Activated CD8-positive, alpha-beta T cell treated with anti-CD3 and anti-CD28 coated beads, Interleukin-2, amount 10 ng/mL, durations not matched to agents 7 days and 5 days (primary cell): ENCODE measurements at regions of chr1 and their contacts with region 1.

Region 1: DNA sequence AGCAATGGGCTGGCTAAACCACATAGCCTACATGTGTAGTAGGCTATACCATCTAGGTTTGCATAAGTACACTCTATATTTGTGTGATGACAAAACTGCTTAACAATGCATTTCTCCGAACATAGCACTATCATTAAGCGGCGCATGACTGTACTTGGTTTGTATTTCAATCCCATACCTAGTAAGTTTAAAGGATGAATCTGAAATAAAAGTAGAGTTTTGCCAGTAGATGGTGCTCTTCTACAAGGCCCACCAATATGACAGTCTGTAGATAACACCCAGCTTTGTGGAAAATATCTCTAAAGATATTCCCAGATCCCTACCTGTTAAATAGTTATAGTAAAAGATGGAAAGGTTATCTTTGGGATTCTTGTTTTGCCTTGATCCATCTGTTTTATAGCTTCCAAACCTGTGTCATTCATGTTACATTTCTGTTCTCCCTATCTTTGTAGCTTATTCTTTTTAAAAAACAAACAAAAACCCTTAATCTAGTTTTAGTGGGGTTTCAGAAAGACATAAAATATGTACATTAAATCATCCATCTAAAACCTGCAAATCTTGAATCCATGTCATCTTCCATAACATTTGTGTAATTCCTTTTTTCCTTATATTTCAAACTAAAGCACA is 33.9 kb upstream of the ASPM start:
- DNase-seq: no peak
- ATAC-seq: peak; percentile 70
- H3K4me3 Mint-ChIP-seq: no peak overlapping the region
- H3K27ac Mint-ChIP-seq: no peak overlapping the region
- H3K4me1 Mint-ChIP-seq: no peaks in the 10 kb centered on the region
- H3K27me3 Mint-ChIP-seq: no peaks in the 10 kb centered on the region

Region 2: GRCh38 chr1:197096137-197096536 is 84.2 kb before region 1 on chr1:
- CTCF ChIA-PET with region 1: no interaction called
- POLR2A ChIA-PET with region 1: no interaction called
- DNase-seq: no peak
- ATAC-seq: no peak
- H3K4me3 Mint-ChIP-seq: no peak overlapping the region
- H3K27ac Mint-ChIP-seq: no peak overlapping the region
- H3K4me1 Mint-ChIP-seq: no peaks in the 10 kb centered on the region
- H3K27me3 Mint-ChIP-seq: no peaks in the 10 kb centered on the region

Region 3: GRCh38 chr1:197195100-197195499 is 14.7 kb after region 1 on chr1:
- CTCF ChIA-PET with region 1: interaction called, 27 read pairs
- POLR2A ChIA-PET with region 1: no interaction called
- DNase-seq: no peak
- ATAC-seq: no peak
- H3K4me3 Mint-ChIP-seq: no peak overlapping the region
- H3K27ac Mint-ChIP-seq: no peak overlapping the region
- H3K4me1 Mint-ChIP-seq: peaks cover 38% of the 10 kb centered on the region
- H3K27me3 Mint-ChIP-seq: no peaks in the 10 kb centered on the region

Region 4: GRCh38 chr1:197234581-197234980 is 54.2 kb after region 1 on chr1:
- CTCF ChIA-PET with region 1: no interaction called
- POLR2A ChIA-PET with region 1: no interaction called
- DNase-seq: no peak
- ATAC-seq: no peak
- H3K4me3 Mint-ChIP-seq: no peak overlapping the region
- H3K27ac Mint-ChIP-seq: no peak overlapping the region
- H3K4me1 Mint-ChIP-seq: no peaks in the 10 kb centered on the region
- H3K27me3 Mint-ChIP-seq: no peaks in the 10 kb centered on the region

Region 5: DNA sequence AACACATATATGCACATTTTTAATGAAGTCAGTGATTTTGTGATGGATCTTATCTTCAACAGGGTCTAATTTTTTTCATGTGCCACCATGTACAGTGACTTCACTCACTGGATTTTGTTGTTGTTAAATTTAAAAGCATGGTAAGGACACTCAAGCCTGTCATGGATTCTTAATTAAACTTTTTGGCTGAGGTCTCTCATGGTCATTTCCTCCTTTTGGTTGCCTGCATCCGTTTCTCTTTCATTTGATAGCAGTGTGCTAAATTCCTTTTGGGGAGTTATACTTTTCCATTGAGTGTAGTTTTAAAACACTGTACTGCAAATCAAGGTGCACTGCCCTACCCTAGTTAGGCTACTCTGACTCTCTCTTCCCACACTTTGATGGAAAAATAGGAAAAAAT is 74.5 kb after region 1 on chr1:
- CTCF ChIA-PET with region 1: no interaction called
- POLR2A ChIA-PET with region 1: no interaction called
- DNase-seq: no peak
- ATAC-seq: no peak
- H3K4me3 Mint-ChIP-seq: no peak overlapping the region
- H3K27ac Mint-ChIP-seq: no peak overlapping the region
- H3K4me1 Mint-ChIP-seq: no peaks in the 10 kb centered on the region
- H3K27me3 Mint-ChIP-seq: no peaks in the 10 kb centered on the region

Region 6: GRCh38 chr1:197327776-197328364 is 147.5 kb after region 1 on chr1:
- CTCF ChIA-PET with region 1: interaction called, 10 read pairs
- POLR2A ChIA-PET with region 1: no interaction called
- DNase-seq: no peak
- ATAC-seq: no peak
- H3K4me3 Mint-ChIP-seq: no peak overlapping the region
- H3K27ac Mint-ChIP-seq: no peak overlapping the region
- H3K4me1 Mint-ChIP-seq: no peaks in the 10 kb centered on the region
- H3K27me3 Mint-ChIP-seq: peaks cover 10% of the 10 kb centered on the region

Region 7: GRCh38 chr1:197343663-197344273 is 163.4 kb after region 1 on chr1:
- CTCF ChIA-PET with region 1: interaction called, 11 read pairs
- POLR2A ChIA-PET with region 1: no interaction called
- DNase-seq: no peak
- ATAC-seq: no peak
- H3K4me3 Mint-ChIP-seq: no peak overlapping the region
- H3K27ac Mint-ChIP-seq: no peak overlapping the region
- H3K4me1 Mint-ChIP-seq: peaks cover 15% of the 10 kb centered on the region
- H3K27me3 Mint-ChIP-seq: peaks cover 7% of the 10 kb centered on the region

Region 8: DNA sequence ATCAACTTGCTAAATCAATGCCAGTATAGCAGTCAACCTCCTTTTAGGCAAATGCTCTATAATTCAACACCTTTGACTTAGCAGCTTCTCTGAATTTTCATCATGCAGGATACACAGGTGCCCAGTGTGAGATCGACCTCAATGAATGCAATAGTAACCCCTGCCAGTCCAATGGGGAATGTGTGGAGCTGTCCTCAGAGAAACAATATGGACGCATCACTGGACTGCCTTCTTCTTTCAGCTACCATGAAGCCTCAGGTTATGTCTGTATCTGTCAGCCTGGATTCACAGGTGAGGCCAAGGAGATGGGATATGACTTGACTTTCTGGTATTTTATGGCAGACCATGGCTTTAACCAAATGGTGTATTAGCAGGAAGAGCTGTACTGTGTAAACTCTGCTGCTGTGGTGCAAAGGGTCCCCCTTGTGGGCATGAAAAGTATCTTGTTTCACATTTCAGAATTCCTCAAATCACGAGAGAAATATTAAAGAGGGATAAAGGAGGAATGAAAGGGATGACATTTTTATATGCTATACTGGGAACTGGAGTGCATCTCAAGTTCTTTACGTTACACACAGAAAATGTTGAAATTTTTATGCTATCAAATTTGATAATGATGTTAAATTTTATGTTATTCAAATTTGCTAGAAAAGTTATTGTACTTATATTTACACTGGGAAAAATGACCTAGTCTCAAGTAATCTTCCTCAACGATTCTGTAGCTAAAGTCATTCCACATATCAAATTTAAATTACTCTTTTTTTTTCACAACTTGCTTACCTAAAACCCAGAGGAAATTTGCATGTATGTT is 176.6 kb after region 1 on chr1:
- CTCF ChIA-PET with region 1: interaction called, 51 read pairs
- POLR2A ChIA-PET with region 1: no interaction called
- DNase-seq: peak; percentile 45
- ATAC-seq: peak; percentile 70
- H3K4me3 Mint-ChIP-seq: no peak overlapping the region
- H3K27ac Mint-ChIP-seq: no peak overlapping the region
- H3K4me1 Mint-ChIP-seq: no peaks in the 10 kb centered on the region
- H3K27me3 Mint-ChIP-seq: no peaks in the 10 kb centered on the region

Region 9: GRCh38 chr1:197521118-197521739 is 340.9 kb after region 1 on chr1:
- CTCF ChIA-PET with region 1: no interaction called
- POLR2A ChIA-PET with region 1: no interaction called
- DNase-seq: peak; percentile 49
- ATAC-seq: peak; percentile 36
- H3K4me3 Mint-ChIP-seq: no peak overlapping the region
- H3K27ac Mint-ChIP-seq: no peak overlapping the region
- H3K4me1 Mint-ChIP-seq: no peaks in the 10 kb centered on the region
- H3K27me3 Mint-ChIP-seq: no peaks in the 10 kb centered on the region